Natural killer cell (primary cell): ENCODE measurements at regions of chr4 and their contacts with region 1.

Region 1: DNA sequence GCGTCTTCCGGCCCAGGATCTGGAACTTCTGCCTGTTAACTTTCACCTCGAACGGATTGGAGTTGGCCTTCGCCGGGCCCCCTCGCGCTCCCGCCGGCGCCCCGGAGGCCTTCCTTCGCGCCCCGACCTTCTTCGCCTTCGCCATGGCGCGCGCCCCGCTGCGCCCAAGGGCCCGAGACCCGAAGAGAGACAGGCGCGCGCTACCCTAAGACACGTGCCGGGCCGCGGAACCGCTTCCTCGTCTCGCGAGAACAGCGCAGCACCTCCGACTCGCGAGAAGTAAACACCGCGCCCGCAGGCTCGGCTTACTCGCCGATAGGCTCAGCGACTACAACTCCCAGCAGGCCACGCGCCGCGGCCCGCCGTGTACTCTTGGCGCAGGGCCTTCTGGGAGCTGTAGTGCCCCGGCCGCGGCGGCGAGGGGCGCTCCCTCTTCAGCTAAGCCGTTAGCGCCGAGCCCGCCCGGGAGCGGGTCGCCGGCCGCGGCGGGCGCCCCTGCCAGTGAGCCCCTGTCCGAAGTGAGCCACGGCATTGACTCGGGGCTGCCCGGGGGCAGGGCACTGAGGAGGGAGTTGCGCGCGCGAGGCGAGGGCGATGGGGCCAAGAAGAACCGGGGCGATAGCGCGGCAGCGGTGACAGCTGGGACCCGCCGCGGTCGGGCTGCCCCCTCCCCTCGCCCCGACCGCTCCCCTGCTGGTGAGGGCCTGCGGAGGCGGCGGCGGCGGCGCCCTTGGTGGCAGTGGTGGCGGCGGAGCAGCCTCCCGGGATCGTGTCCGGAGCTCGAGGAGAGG is at the starts of genes GRK4 and NOP14:
- DNase-seq: peak; percentile 94 to 99
- ATAC-seq: peak; percentile 91 to 98 (median 93)
- H3K4me3 ChIP-seq: peak within 1 kb of the TSS; percentile 71
- H3K4me3 Mint-ChIP-seq: peak within 1 kb of the TSS; percentile 91
- H3K27ac ChIP-seq: peak within 1 kb of the TSS; percentile 71
- H3K27ac Mint-ChIP-seq: peak within 1 kb of the TSS; percentile 88 to 90
- H3K4me1 ChIP-seq: peaks cover 26% of the 10 kb centered on the region
- H3K4me1 Mint-ChIP-seq: peaks cover 32 to 47% of the 10 kb centered on the region in 2 donors
- H3K27me3 ChIP-seq: no peaks in the 10 kb centered on the region
- H3K27me3 Mint-ChIP-seq: no peaks in the 10 kb centered on the region
- CTCF ChIP-seq: peak; percentile 46
- total RNA-seq, gene GRK4: 2.0 to 6.4 (median 5.1) TPM
- total RNA-seq, gene NOP14: 20.9 to 25.0 (median 21.1) TPM

Region 2: GRCh38 chr4:2418650-2419571 is 544.5 kb before region 1 on chr4 and contains the start of gene CFAP99:
- intact Hi-C with region 1: loop called (anchors 2 kb)
- DNase-seq: peak; percentile 91 to 99
- ATAC-seq: peak; percentile 85 to 97 (median 89)
- H3K4me3 ChIP-seq: peak within 1 kb of the TSS; percentile 36
- H3K4me3 Mint-ChIP-seq: peak within 1 kb of the TSS; percentile 92
- H3K27ac ChIP-seq: peak within 1 kb of the TSS; percentile 78
- H3K27ac Mint-ChIP-seq: peak within 1 kb of the TSS; percentile 87 to 88
- H3K4me1 ChIP-seq: peaks cover 41% of the 10 kb centered on the region
- H3K4me1 Mint-ChIP-seq: peaks cover 41 to 48% of the 10 kb centered on the region in 2 donors
- H3K27me3 ChIP-seq: peaks cover 25% of the 10 kb centered on the region
- H3K27me3 Mint-ChIP-seq: peaks cover 16 to 20% of the 10 kb centered on the region in 2 donors
- CTCF ChIP-seq: peak; percentile 26
- total RNA-seq, gene CFAP99: not detected

Region 3: GRCh38 chr4:2761035-2761923 is 202.1 kb before region 1 on chr4:
- intact Hi-C with region 1: loop called (anchors 10 kb)
- DNase-seq: no peak
- ATAC-seq: no peak
- H3K4me3 ChIP-seq: no peak overlapping the region
- H3K4me3 Mint-ChIP-seq: no peak overlapping the region
- H3K27ac ChIP-seq: no peak overlapping the region
- H3K27ac Mint-ChIP-seq: no peak overlapping the region
- H3K4me1 ChIP-seq: peaks cover 20% of the 10 kb centered on the region
- H3K4me1 Mint-ChIP-seq: peaks cover 8 to 14% of the 10 kb centered on the region in 2 donors
- H3K27me3 ChIP-seq: no peaks in the 10 kb centered on the region
- H3K27me3 Mint-ChIP-seq: no peaks in the 10 kb centered on the region
- CTCF ChIP-seq: no peak

Region 4: GRCh38 chr4:2934813-2935761 is 28.3 kb before region 1 on chr4:
- intact Hi-C with region 1: loop called (anchors 2 kb)
- DNase-seq: peak; percentile 98
- ATAC-seq: peak; percentile 78 to 86 (median 83)
- H3K4me3 ChIP-seq: peak overlapping the region; percentile 55
- H3K4me3 Mint-ChIP-seq: peak overlapping the region; percentile 78
- H3K27ac ChIP-seq: peak overlapping the region; percentile 65
- H3K27ac Mint-ChIP-seq: peak overlapping the region; percentile 71 to 83
- H3K4me1 ChIP-seq: peaks cover 60% of the 10 kb centered on the region
- H3K4me1 Mint-ChIP-seq: peaks cover 39 to 44% of the 10 kb centered on the region in 2 donors
- H3K27me3 ChIP-seq: no peaks in the 10 kb centered on the region
- H3K27me3 Mint-ChIP-seq: no peaks in the 10 kb centered on the region
- CTCF ChIP-seq: no peak

Region 5: GRCh38 chr4:3047464-3048286 is 84.3 kb after region 1 on chr4:
- intact Hi-C with region 1: loop called (anchors 5 kb)
- DNase-seq: peak; percentile 70 to 83
- ATAC-seq: peak; percentile 59 to 78 (median 66)
- H3K4me3 ChIP-seq: peak overlapping the region; percentile 11
- H3K4me3 Mint-ChIP-seq: peak overlapping the region; percentile 83
- H3K27ac ChIP-seq: peak overlapping the region; percentile 81
- H3K27ac Mint-ChIP-seq: peak overlapping the region; percentile 91 to 97
- H3K4me1 ChIP-seq: peaks cover 49% of the 10 kb centered on the region
- H3K4me1 Mint-ChIP-seq: peaks cover 38 to 42% of the 10 kb centered on the region in 2 donors
- H3K27me3 ChIP-seq: no peaks in the 10 kb centered on the region
- H3K27me3 Mint-ChIP-seq: no peaks in the 10 kb centered on the region
- CTCF ChIP-seq: peak; percentile 51